ENCODE measurements at regions of chr10 and their contacts with region 1.

Region 1: DNA sequence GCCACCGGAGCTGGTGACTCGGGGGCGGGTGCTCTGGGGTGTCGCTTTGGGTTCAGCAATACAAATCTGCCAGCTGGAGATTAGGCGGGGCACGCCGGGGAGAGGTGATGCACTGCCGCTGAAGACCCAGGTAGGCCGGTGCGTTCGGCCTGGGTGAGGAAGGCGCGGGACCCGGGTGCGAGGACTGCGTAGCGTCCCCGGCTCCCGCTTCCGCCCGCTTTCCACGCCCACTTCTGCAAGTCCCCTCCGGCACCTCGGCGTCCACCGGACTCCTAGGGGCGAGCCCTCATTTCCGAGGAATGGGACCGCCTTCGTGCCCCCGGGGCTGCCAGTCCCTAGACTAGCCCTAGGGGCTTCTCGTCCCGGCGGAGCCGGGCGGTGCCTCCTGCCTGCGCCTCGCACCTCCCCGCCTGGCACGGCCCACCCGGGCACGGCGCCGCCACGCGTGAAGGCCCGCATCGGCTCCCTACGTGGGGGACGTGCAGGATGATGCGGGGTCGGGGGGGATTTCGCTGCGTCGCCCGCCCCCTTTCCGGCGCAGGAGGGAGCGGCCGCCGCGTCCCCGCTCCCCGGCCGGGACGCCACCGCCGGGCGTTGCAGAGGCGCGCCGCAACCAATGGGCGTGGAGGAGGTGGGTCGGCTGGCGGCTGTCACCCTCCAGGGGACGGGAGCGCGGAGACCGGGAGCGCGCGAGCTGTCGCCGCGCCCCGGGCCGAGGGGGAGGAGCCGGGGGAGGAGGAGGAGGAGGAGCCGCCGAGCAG is 40.0 kb downstream of the HK1 start:
- DNase-seq: peak; percentile 94 to 97 (median 97)
- ATAC-seq: peak; percentile 95 to 96
- H3K4me3 ChIP-seq: peak overlapping the region; percentile 73
- H3K27ac ChIP-seq: peak overlapping the region; percentile 91
- H3K4me1 ChIP-seq: peaks cover 24% of the 10 kb centered on the region
- H3K27me3 ChIP-seq: no peaks in the 10 kb centered on the region

Region 2: DNA sequence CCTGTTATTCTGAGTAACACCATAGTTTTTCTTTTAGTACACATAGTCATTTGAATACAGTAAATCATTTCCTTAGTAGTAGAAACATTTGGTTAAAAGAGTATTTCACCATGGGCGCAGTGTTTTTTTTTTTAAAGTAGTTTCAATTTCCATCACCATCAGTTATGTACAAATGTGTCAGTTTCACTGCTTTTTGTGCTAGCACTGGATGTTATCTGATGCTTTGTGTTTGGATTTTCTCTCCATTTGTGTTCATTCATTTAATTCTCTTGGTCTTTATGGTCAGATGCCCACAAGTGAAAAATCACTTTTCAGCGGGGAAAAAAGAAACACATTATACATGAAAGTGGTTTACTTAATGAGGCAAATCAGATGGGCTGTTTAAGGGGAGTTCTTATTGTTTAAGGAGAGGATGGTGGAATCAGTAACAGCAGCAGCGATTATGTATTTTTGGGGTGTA is 56.0 kb before region 1 on chr10:
- intact Hi-C with region 1: loop called in 1 of 4 experiments (anchors 10 kb)
- DNase-seq: no peak
- ATAC-seq: no peak
- H3K4me3 ChIP-seq: no peak overlapping the region
- H3K27ac ChIP-seq: no peak overlapping the region
- H3K4me1 ChIP-seq: no peaks in the 10 kb centered on the region
- H3K27me3 ChIP-seq: no peaks in the 10 kb centered on the region

Region 3: DNA sequence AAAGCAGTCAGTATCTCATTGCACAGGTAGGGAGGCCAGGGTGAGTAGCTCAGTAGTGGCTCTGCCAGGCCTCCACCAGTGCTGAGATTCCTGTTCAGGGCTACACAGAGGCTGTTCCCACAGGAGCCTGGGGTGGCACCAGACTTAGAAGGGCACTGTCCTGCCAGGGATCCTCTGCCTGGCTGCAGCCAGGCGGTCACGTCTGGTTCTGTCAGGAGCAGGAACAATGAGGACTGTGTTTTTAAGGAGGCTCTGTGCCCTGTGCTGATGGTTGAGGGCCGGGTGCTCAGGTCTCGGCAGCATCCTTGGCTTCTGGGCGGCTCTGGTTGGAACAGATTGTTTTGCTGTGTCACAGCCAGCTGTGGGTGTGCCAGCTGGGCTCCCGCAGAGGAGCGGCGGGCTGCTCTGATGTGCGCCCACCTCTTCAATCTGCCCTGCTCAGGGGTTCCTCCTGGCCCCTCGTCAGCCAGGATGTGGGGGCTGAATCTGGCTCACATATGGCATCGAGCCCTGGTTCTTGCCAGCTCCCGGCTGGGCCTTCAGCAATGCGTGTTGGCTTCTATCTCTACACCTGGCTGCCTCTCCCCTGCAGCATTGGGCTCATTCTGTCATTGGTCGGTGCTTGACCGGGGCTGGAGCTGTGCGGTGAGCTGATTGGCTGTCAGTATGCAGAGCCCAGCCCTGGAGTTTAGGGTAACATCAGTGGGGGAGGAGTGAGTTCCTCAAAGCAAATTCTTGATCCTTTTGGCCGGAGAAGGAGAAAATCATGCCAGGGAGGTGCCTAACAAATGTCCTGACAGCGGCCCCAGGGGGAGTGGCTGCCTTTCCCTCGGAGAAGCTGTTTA is 57.2 kb after region 1 on chr10:
- intact Hi-C with region 1: loop called (anchors 5 to 10 kb)
- DNase-seq: peak; percentile 48 to 81 (median 79)
- ATAC-seq: peak; percentile 67 to 85
- H3K4me3 ChIP-seq: no peak overlapping the region
- H3K27ac ChIP-seq: peak overlapping the region; percentile 37
- H3K4me1 ChIP-seq: peaks cover 18% of the 10 kb centered on the region
- H3K27me3 ChIP-seq: no peaks in the 10 kb centered on the region

Region 4: GRCh38 chr10:69383558-69383957 is 65.3 kb after region 1 on chr10:
- intact Hi-C with region 1: loop called (anchors 5 to 10 kb)
- DNase-seq: peak; percentile 41 to 70 (median 70)
- ATAC-seq: peak; percentile 54 to 57
- H3K4me3 ChIP-seq: no peak overlapping the region
- H3K27ac ChIP-seq: no peak overlapping the region
- H3K4me1 ChIP-seq: peaks cover 1% of the 10 kb centered on the region
- H3K27me3 ChIP-seq: no peaks in the 10 kb centered on the region

Region 5: DNA sequence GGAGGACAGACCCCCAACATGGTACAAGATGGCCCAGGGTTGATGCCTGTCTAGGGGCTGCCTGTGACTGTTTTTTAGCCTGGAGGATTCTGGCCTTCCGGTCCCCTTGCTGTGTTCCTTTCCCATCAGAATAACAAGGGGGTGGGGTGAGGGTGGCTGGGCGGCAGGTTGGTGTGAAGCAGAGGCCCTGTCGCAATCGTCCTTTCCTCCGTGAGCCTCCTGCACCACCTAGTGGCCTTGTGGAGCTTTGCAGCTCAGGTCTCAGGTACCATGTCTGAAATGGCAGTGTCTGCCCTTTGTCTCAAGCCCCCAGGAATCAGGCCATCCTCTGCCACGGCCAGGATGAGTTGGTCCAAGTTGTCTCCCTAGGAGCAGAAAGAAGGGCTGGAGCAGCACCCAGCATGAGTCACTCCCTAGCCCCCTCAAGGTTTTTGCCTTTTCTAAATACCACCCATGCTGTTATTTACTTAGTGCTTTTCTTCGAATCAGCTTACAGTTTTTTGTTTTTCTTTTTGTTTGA is 74.3 kb after region 1 on chr10:
- intact Hi-C with region 1: loop called in 1 of 4 experiments (anchors 5 kb)
- DNase-seq: peak; percentile 85 to 94 (median 93)
- ATAC-seq: peak; percentile 87 to 90
- H3K4me3 ChIP-seq: no peak overlapping the region
- H3K27ac ChIP-seq: peak overlapping the region; percentile 9
- H3K4me1 ChIP-seq: no peaks in the 10 kb centered on the region
- H3K27me3 ChIP-seq: no peaks in the 10 kb centered on the region

Region 6: GRCh38 chr10:69438242-69439068 is 120.2 kb after region 1 on chr10:
- intact Hi-C with region 1: no loop called
- DNase-seq: no peak
- ATAC-seq: peak; percentile 59 to 70
- H3K4me3 ChIP-seq: no peak overlapping the region
- H3K27ac ChIP-seq: peak overlapping the region; percentile 40
- H3K4me1 ChIP-seq: peaks cover 7% of the 10 kb centered on the region
- H3K27me3 ChIP-seq: no peaks in the 10 kb centered on the region

Region 7: GRCh38 chr10:69911613-69912528 is 593.6 kb after region 1 on chr10:
- intact Hi-C with region 1: no loop called
- DNase-seq: peak; percentile 35 to 82 (median 66)
- ATAC-seq: peak; percentile 60 to 87
- H3K4me3 ChIP-seq: no peak overlapping the region
- H3K27ac ChIP-seq: peak overlapping the region; percentile 76
- H3K4me1 ChIP-seq: peaks cover 19% of the 10 kb centered on the region
- H3K27me3 ChIP-seq: no peaks in the 10 kb centered on the region

Measured in right cardiac atrium (tissue), 5 donors.